Thyroid gland (tissue), 4 donors: ENCODE measurements at regions of chr15 and their contacts with region 1.

Region 1: DNA sequence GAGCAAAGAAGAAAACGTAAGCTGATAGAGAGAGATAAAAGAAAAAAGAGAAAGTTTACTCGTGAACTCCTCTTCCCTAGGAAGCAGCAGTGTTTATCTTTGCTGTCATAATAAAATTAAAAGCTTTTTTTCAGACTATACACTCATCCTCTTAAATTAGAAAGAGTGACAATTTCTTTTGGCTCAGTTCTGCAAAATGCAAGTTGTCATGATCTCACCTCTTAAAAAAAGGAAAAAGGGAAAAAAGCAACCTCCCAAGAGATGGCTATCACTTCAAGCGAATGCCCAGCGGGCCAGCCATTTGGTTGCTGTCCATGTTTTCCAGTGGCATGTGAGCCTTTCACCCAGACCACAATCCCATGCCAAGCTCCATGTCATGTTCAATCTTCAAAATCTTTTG is 7.0 kb upstream of the THBS1 start:
- DNase-seq: no peak
- H3K4me3 ChIP-seq: no peak overlapping the region
- H3K27ac ChIP-seq: no peak overlapping the region
- H3K4me1 ChIP-seq: peaks cover 0 to 2% of the 10 kb centered on the region in 2 donors
- H3K27me3 ChIP-seq: no peaks in the 10 kb centered on the region
- CTCF ChIP-seq: no peak
- POLR2A ChIP-seq: no peak

Region 2: GRCh38 chr15:38809621-38810020 is 764.2 kb before region 1 on chr15:
- intact Hi-C with region 1: loop called (anchors 5 kb)
- DNase-seq: no peak
- H3K4me3 ChIP-seq: no peak overlapping the region
- H3K27ac ChIP-seq: no peak overlapping the region
- H3K4me1 ChIP-seq: no peaks in the 10 kb centered on the region
- H3K27me3 ChIP-seq: no peaks in the 10 kb centered on the region
- CTCF ChIP-seq: no peak
- POLR2A ChIP-seq: no peak

Region 3: DNA sequence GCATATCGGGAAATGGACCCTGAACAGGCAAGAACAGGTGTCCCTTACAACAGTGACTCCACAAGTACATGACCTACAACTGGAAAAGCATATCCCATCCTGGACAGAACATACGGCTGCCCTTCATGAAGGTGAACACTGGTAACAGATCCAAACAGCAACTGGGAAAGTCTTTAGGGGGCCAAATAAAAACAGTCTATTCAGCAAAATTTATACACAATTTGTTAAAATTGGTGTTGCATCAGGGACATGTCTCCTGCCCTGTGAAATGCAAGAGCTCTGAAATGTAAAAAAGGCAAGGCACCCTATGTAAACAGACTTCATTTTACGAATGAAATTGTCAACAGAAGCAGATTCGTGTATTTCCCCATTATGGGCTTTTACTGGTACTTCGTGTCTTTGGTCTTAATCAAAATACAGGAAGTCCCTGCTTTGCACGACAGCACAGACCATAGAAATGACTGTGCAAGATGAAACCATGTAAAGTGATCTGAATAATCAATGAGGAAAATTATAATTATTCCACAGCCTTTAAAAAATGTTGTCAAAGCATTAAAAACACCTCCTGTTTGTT is 120.3 kb before region 1 on chr15:
- intact Hi-C with region 1: no loop called
- DNase-seq: no peak
- H3K4me3 ChIP-seq: no peak overlapping the region
- H3K27ac ChIP-seq: no peak overlapping the region
- H3K4me1 ChIP-seq: no peaks in the 10 kb centered on the region
- H3K27me3 ChIP-seq: no peaks in the 10 kb centered on the region
- CTCF ChIP-seq: no peak
- POLR2A ChIP-seq: no peak